A673 (cell line): ENCODE measurements at regions of chr2 and their contacts with region 1.

Region 1: DNA sequence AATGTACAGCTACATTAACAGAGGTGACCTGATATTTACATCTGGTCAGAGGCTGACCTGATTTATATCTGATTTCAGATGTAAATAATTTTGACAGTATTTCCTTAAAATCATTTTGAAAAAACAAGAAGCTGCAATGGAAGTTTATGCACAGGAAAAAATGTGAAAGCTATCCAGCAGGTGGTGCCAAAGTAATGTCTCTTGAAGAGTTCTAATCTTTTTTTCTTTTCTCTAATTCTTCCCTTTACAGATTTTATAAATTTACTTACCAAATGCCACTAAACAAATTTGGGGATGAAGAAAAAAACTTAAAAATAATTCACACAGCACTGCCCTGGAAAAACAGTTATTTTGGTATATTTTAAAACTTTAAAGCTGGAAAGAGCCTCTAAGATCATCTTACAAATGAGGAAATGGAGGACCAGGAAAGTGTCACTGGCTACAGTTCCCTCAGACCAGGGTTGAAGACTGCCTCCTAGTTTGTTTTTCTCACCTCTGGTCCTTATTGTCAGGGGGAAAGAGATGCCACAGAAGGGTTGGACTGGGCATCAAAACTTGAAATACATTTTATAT is 16.4 kb upstream of the FBLN7 start:
- DNase-seq: peak; percentile 66
- H3K4me3 ChIP-seq: no peak overlapping the region
- H3K27ac ChIP-seq: no peak overlapping the region
- H3K4me1 ChIP-seq: no peaks in the 10 kb centered on the region
- H3K27me3 ChIP-seq: no peaks in the 10 kb centered on the region
- CTCF ChIP-seq: peak; percentile 81

Region 2: GRCh38 chr2:111883661-111884591 is 237.8 kb before region 1 on chr2 and contains the start of gene ANAPC1:
- CTCF ChIA-PET with region 1: interaction called, 3 read pairs
- POLR2A ChIA-PET with region 1: no interaction called
- intact Hi-C with region 1: loop called (anchors 5 kb)
- DNase-seq: peak; percentile 96
- H3K4me3 ChIP-seq: peak within 1 kb of the TSS; percentile 98
- H3K27ac ChIP-seq: peak within 1 kb of the TSS; percentile 93
- H3K4me1 ChIP-seq: peaks cover 11% of the 10 kb centered on the region
- H3K27me3 ChIP-seq: no peaks in the 10 kb centered on the region
- CTCF ChIP-seq: no peak
- total RNA-seq, gene ANAPC1: 102 and 107 TPM in 2 replicates

Region 3: GRCh38 chr2:112108178-112108832 is 13.5 kb before region 1 on chr2:
- CTCF ChIA-PET with region 1: interaction called, 13 read pairs
- POLR2A ChIA-PET with region 1: no interaction called
- intact Hi-C with region 1: no loop called
- DNase-seq: no peak
- H3K4me3 ChIP-seq: no peak overlapping the region
- H3K27ac ChIP-seq: no peak overlapping the region
- H3K4me1 ChIP-seq: no peaks in the 10 kb centered on the region
- H3K27me3 ChIP-seq: no peaks in the 10 kb centered on the region
- CTCF ChIP-seq: no peak

Region 4: DNA sequence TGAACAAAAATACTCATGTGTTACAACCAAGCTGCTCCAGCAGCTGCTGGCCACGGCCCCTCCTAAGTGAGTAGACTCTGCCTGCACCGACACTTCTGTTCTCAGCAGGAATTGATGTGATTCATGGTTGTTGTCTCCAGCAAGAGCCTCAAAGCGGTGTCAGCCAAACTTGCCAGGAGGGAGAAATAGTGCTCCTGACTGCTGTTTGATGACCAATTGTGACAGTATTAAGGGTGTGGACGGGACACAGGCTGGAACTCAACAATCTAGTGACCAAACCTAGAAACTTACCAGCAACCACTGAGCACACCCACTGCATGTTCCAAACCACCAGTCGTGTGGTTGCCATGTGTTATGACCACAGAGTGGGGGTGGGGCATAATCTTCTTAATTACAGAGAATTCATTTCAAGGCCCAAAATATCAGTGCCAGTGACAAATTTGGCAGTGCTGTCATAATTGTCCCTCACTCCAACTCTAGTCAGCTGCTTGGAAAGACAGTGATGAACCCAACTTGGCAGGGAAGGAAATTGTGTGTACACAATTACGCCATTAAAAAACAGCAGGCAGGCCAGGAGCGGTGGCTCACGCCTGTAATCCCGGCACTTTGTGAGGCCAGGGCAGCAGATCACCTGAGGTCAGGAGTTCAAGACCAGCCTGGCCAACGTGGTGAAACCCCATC is 46.8 kb after region 1 on chr2:
- CTCF ChIA-PET with region 1: no interaction called
- POLR2A ChIA-PET with region 1: no interaction called
- intact Hi-C with region 1: no loop called
- DNase-seq: peak; percentile 62
- H3K4me3 ChIP-seq: no peak overlapping the region
- H3K27ac ChIP-seq: no peak overlapping the region
- H3K4me1 ChIP-seq: peaks cover 24% of the 10 kb centered on the region
- H3K27me3 ChIP-seq: no peaks in the 10 kb centered on the region
- CTCF ChIP-seq: no peak

Region 5: DNA sequence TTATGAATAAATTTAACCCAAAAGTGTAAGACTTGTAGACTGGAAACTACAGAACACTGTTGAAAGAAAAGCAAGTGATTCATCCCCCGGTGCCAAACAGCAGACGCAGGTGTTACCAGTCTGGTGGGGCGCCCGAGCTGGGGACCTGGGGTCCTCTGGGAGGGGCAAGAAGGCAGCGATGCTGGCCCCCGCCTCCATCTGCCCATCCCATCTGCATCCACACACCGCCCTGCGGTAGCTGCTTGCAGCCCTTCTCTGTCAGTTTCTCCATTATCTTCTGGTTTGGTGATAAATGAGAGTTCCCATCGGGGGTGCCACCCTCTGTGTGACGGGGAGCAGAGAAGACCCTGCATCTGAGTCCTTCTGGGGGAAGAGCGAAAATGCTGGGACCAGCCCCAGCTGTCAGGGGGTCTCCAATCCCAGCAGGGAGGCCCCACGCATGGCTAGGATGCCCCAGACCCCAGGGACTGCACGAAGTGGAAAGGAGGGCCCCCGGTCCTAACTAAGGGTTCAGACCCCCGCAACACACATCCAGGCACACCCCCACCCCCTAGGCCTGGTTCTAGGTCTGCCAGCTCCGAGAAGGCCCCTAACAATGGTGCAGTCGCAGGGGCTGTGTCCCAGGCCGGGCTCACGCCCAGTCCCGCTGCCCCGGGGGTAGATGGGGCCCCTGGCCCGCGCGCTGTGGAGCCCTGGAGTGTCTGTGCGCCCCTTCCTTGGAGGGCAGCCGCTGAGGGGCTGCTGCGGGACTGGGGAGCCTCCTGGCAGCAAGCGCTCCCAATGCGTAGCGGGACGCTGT is 312.4 kb after region 1 on chr2:
- CTCF ChIA-PET with region 1: interaction called, 11 read pairs
- POLR2A ChIA-PET with region 1: no interaction called
- intact Hi-C with region 1: no loop called
- DNase-seq: no peak
- H3K4me3 ChIP-seq: no peak overlapping the region
- H3K27ac ChIP-seq: no peak overlapping the region
- H3K4me1 ChIP-seq: peaks cover 6% of the 10 kb centered on the region
- H3K27me3 ChIP-seq: no peaks in the 10 kb centered on the region
- CTCF ChIP-seq: no peak

Region 6: GRCh38 chr2:112606488-112606902 is 484.7 kb after region 1 on chr2:
- CTCF ChIA-PET with region 1: no interaction called
- POLR2A ChIA-PET with region 1: no interaction called
- intact Hi-C with region 1: no loop called
- DNase-seq: no peak
- H3K4me3 ChIP-seq: no peak overlapping the region
- H3K27ac ChIP-seq: no peak overlapping the region
- H3K4me1 ChIP-seq: no peaks in the 10 kb centered on the region
- H3K27me3 ChIP-seq: no peaks in the 10 kb centered on the region
- CTCF ChIP-seq: no peak